CD4-positive, alpha-beta T cell (primary cell): ENCODE measurements at regions of chr10 and their contacts with region 1.

Region 1: GRCh38 chr10:124916585-124917427 is 25.1 kb upstream of the ZRANB1 start:
- DNase-seq: peak; percentile 91 to 98 (median 96)
- ATAC-seq: peak; percentile 88
- H3K4me3 ChIP-seq: peak overlapping the region; percentile 94
- H3K4me3 Mint-ChIP-seq: peak overlapping the region; percentile 93
- H3K27ac ChIP-seq: peak overlapping the region; percentile 67 to 91
- H3K27ac Mint-ChIP-seq: peak overlapping the region; percentile 97
- H3K4me1 ChIP-seq: peaks cover 15% of the 10 kb centered on the region
- H3K4me1 Mint-ChIP-seq: peaks cover 46% of the 10 kb centered on the region
- H3K27me3 ChIP-seq: no peaks in the 10 kb centered on the region
- H3K27me3 Mint-ChIP-seq: peaks cover 5% of the 10 kb centered on the region
- CTCF ChIP-seq: no peak

Region 2: DNA sequence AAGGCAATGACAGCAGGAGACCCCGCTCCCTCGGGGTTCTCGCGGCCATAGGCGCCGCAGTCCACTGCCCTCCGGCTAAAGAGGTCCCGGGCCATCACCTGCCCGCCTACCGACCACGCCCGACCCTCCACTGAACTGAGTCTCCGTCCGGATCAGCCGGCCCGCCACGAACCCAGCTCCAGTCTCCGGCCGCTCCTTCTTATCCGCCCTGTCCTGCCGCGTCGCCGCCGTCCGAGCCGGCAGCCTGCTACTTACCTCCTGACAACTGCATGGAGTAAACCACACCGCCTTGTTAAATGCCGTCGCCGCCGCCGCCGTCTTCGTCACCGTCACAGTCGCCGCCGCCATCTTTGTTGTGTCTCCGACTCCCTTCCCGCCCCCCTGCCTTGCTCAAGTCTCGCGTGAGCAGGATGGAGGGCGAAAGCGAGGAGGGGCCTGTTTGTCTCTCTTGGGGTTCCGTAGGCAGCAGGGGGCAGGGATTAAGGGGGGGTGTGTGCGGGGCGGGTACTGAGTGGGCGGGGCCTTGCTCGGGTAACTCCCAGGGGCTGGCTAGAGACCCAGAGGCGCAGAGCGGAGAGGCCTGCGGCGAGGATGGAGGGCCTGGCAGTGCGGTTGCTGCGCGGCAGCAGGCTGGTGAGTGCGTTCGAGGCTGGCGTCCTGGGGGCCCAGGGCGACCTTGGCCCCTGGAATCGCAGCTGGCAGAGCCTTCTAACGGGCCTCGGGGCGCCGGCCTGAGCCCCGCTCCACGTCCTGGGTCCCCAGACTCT is 1908.2 kb before region 1 on chr10 and contains the starts of genes ACADSB and IKZF5:
- CTCF ChIA-PET with region 1: no interaction called
- POLR2A ChIA-PET with region 1: interaction called, 5 read pairs
- intact Hi-C with region 1: loop called in 1 of 2 experiments (anchors 5 kb)
- DNase-seq: peak; percentile 93 to 99 (median 94)
- ATAC-seq: peak; percentile 86
- H3K4me3 ChIP-seq: peak within 1 kb of the TSS; percentile 91
- H3K4me3 Mint-ChIP-seq: peak within 1 kb of the TSS; percentile 97
- H3K27ac ChIP-seq: peak within 1 kb of the TSS; percentile 94 to 99
- H3K27ac Mint-ChIP-seq: peak within 1 kb of the TSS; percentile 95
- H3K4me1 ChIP-seq: peaks cover 22% of the 10 kb centered on the region
- H3K4me1 Mint-ChIP-seq: peaks cover 68% of the 10 kb centered on the region
- H3K27me3 ChIP-seq: no peaks in the 10 kb centered on the region
- H3K27me3 Mint-ChIP-seq: no peaks in the 10 kb centered on the region
- CTCF ChIP-seq: no peak
- total RNA-seq, gene ACADSB: 16.6 to 17.9 TPM
- total RNA-seq, gene IKZF5: 81.8 to 87.1 TPM

Region 3: GRCh38 chr10:124418726-124419501 is 497.9 kb before region 1 on chr10 and contains the start of gene OAT:
- CTCF ChIA-PET with region 1: no interaction called
- POLR2A ChIA-PET with region 1: interaction called, 3 read pairs
- intact Hi-C with region 1: loop called in 1 of 2 experiments (anchors 10 kb)
- DNase-seq: peak; percentile 91 to 98 (median 96)
- ATAC-seq: peak; percentile 97
- H3K4me3 ChIP-seq: peak within 1 kb of the TSS; percentile 75
- H3K4me3 Mint-ChIP-seq: peak within 1 kb of the TSS; percentile 92
- H3K27ac ChIP-seq: peak within 1 kb of the TSS; percentile 23 to 44
- H3K27ac Mint-ChIP-seq: peak within 1 kb of the TSS; percentile 82
- H3K4me1 ChIP-seq: peaks cover 14% of the 10 kb centered on the region
- H3K4me1 Mint-ChIP-seq: peaks cover 41% of the 10 kb centered on the region
- H3K27me3 ChIP-seq: peaks cover 0 to 3% of the 10 kb centered on the region in 2 experiments
- H3K27me3 Mint-ChIP-seq: peaks cover 9% of the 10 kb centered on the region
- CTCF ChIP-seq: no peak
- total RNA-seq, gene OAT: 48.5 to 54.9 TPM

Region 4: DNA sequence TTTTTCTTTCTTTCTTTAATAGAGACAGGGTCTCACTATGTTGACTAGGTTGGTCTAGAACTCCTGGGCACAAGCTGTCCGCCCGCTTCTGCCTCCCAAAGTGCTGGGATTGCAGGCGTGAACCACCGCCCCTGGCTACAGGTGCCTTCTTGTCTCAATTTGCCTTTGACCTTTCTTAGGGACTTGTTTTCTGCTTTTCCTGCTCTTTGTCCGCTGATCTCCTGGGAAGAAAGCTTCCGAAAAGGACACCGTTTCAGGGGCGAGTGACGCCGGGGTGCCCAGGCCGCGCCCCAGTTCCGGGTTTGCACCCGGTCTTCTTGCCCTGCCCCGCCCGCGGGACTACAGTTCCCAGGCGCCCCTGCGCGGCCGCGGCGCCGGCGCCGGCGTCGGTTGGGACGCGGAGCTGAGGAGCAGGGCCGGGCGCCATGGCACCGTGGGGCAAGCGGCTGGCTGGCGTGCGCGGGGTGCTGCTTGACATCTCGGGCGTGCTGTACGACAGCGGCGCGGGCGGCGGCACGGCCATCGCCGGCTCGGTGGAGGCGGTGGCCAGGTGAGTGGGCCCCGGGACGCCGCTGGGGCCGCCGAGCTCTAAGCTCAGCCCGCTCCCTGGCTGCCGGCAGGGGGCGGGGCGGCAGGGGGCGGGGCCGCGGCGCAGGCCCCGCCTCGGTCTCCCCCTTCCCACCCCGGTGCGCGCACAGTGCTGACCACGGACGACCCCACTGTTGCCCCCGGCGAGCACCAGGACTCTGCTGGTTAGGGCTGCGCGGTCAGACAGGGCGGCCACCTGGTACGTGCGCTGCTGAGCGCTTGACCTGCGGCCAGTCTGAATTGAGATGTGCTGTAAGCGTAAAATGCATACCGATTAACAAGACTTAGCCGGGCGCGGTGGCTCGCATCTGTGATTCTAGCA is 455.1 kb before region 1 on chr10 and contains the start of gene LHPP:
- CTCF ChIA-PET with region 1: no interaction called
- POLR2A ChIA-PET with region 1: interaction called, 5 read pairs
- intact Hi-C with region 1: loop called in 1 of 2 experiments (anchors 5 kb)
- DNase-seq: peak; percentile 65 to 93 (median 84)
- ATAC-seq: peak; percentile 94
- H3K4me3 ChIP-seq: peak within 1 kb of the TSS; percentile 65
- H3K4me3 Mint-ChIP-seq: peak within 1 kb of the TSS; percentile 92
- H3K27ac ChIP-seq: peak within 1 kb of the TSS; percentile 53 to 67
- H3K27ac Mint-ChIP-seq: peak within 1 kb of the TSS; percentile 83
- H3K4me1 ChIP-seq: peaks cover 36% of the 10 kb centered on the region
- H3K4me1 Mint-ChIP-seq: peaks cover 27% of the 10 kb centered on the region
- H3K27me3 ChIP-seq: peaks cover 0 to 8% of the 10 kb centered on the region in 2 experiments
- H3K27me3 Mint-ChIP-seq: peaks cover 10% of the 10 kb centered on the region
- CTCF ChIP-seq: peak; percentile 17
- total RNA-seq, gene LHPP: 15.3 to 19.6 TPM

Region 5: GRCh38 chr10:124791378-124792348 is 125.1 kb before region 1 on chr10 and contains the start of gene EEF1AKMT2:
- CTCF ChIA-PET with region 1: no interaction called
- POLR2A ChIA-PET with region 1: no interaction called
- intact Hi-C with region 1: loop called in 1 of 2 experiments (anchors 2 kb)
- DNase-seq: peak; percentile 61 to 92 (median 78)
- ATAC-seq: peak; percentile 92
- H3K4me3 ChIP-seq: peak within 1 kb of the TSS; percentile 80
- H3K4me3 Mint-ChIP-seq: peak within 1 kb of the TSS; percentile 99
- H3K27ac ChIP-seq: peak within 1 kb of the TSS; percentile 65 to 74
- H3K27ac Mint-ChIP-seq: peak within 1 kb of the TSS; percentile 92
- H3K4me1 ChIP-seq: peaks cover 15% of the 10 kb centered on the region
- H3K4me1 Mint-ChIP-seq: peaks cover 22% of the 10 kb centered on the region
- H3K27me3 ChIP-seq: no peaks in the 10 kb centered on the region
- H3K27me3 Mint-ChIP-seq: no peaks in the 10 kb centered on the region
- CTCF ChIP-seq: no peak
- total RNA-seq, gene EEF1AKMT2: 14.4 to 16.7 TPM

Region 6: GRCh38 chr10:124802313-124802675 is 114.5 kb before region 1 on chr10:
- CTCF ChIA-PET with region 1: no interaction called
- POLR2A ChIA-PET with region 1: no interaction called
- intact Hi-C with region 1: loop called in 1 of 2 experiments (anchors 2 kb)
- DNase-seq: peak in 3 of 14 experiments; percentile 11 to 53 (median 47)
- ATAC-seq: no peak
- H3K4me3 ChIP-seq: peak overlapping the region; percentile 95
- H3K4me3 Mint-ChIP-seq: peak overlapping the region; percentile 96
- H3K27ac ChIP-seq: peak overlapping the region; percentile 36 to 72
- H3K27ac Mint-ChIP-seq: peak overlapping the region; percentile 86
- H3K4me1 ChIP-seq: peaks cover 13% of the 10 kb centered on the region
- H3K4me1 Mint-ChIP-seq: peaks cover 22% of the 10 kb centered on the region
- H3K27me3 ChIP-seq: no peaks in the 10 kb centered on the region
- H3K27me3 Mint-ChIP-seq: no peaks in the 10 kb centered on the region
- CTCF ChIP-seq: no peak

Region 7: GRCh38 chr10:125719146-125720001 is 802.6 kb after region 1 on chr10 and contains the start of gene EDRF1:
- CTCF ChIA-PET with region 1: no interaction called
- POLR2A ChIA-PET with region 1: no interaction called
- intact Hi-C with region 1: loop called (anchors 5 kb)
- DNase-seq: peak; percentile 98 to 100 (median 99)
- ATAC-seq: peak; percentile 94
- H3K4me3 ChIP-seq: peak within 1 kb of the TSS; percentile 82
- H3K4me3 Mint-ChIP-seq: peak within 1 kb of the TSS; percentile 100
- H3K27ac ChIP-seq: peak within 1 kb of the TSS; percentile 79 to 89
- H3K27ac Mint-ChIP-seq: peak within 1 kb of the TSS; percentile 99
- H3K4me1 ChIP-seq: peaks cover 26% of the 10 kb centered on the region
- H3K4me1 Mint-ChIP-seq: peaks cover 39% of the 10 kb centered on the region
- H3K27me3 ChIP-seq: no peaks in the 10 kb centered on the region
- H3K27me3 Mint-ChIP-seq: no peaks in the 10 kb centered on the region
- CTCF ChIP-seq: no peak
- total RNA-seq, gene EDRF1: 39.0 to 39.8 TPM